ENCODE measurements at regions of chr2 and their contacts with region 1.

Region 1: DNA sequence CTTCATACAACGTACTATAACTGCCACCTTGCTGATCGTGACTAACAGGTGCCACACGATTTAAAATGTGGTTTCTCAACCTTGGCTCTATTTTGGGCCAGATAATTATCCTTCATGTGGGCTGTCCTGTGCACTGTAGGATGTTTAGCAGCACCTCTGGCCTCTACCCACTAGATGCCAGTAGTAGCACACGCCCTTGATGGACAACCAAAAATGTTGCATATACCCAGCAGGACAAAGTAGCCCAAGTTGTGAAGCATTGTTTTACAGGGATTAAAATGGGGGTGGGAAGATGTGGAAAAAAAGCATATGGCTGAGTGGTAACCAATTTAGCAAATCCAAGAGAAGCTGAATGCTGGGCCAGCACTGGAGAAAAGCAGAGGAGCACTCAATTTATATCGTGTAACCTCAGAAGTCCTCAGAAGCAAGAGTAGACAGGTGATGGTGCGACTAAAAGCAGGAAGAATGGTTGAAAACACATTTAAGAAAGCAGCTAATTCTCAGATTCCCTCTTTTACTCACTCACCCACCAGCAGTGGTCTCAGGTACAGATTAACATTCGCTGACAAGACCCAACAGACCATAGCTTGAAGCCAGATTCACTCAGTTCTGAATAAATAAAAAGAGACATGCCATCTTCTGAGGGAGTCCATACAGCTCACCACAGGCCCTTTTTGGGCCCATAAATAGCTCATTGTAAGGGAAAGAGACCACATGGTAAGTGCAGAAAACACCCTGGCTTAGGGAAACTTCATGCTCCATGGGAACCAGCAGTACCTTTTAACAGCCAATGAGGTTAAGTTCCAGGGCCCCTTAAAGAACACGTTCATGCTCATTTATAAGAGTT is 50.6 kb downstream of the RAPH1 start:
- DNase-seq: peak in 3 of 10 donors; percentile 26 to 64 (median 27)

Region 2: GRCh38 chr2:203751685-203752271 is 267.3 kb after region 1 on chr2:
- intact Hi-C with region 1: no loop called
- DNase-seq: no peak

Region 3: DNA sequence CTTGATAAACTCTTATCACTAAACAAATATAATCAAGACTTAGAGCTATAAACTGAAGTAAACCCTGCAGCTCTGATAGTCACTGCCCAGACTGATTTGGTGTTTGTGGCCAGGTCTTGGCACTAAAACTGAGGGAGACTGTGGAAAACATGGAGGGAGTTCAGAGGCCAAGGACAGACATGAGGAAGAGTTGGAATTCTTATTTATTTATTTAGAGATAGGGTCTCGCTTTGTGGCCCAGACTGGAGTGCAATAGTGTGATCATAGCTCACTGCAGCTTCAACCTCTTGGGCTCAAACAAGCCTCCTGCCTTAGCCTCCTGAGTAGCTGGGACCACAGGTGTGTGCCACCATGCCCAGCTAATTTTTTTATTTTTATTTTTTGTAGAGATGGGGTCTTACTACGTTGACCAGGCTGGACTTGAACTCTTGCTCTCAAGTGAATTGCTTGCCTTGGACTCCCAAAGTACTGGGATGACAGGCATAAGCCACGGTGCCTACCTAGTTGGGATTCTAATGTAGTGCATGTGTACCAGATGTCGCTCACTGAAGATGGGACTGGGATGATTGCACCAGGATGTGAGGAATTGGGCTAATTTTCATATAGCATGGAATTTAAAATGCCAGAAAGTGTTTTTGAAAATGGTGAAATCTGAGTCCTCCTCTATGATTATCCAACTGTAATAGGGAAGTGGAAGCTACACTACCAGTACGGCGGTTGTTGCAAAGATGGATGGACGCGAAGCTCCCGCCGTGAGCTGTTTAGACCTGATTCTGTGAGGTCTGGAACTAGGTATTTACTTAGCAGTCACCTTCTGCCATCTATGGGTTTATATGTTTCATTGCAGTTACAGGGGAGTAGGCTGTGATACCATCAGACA is 330.4 kb after region 1 on chr2:
- intact Hi-C with region 1: loop called (anchors 2 kb)
- DNase-seq: peak in 8 of 10 donors; percentile 21 to 92 (median 55)

Region 4: GRCh38 chr2:203909261-203909967 is 424.9 kb after region 1 on chr2:
- intact Hi-C with region 1: loop called (anchors 5 kb)
- DNase-seq: no peak